Posterior vena cava (tissue), 2 donors: ENCODE measurements at regions of chr20 and their contacts with region 1.

Region 1: DNA sequence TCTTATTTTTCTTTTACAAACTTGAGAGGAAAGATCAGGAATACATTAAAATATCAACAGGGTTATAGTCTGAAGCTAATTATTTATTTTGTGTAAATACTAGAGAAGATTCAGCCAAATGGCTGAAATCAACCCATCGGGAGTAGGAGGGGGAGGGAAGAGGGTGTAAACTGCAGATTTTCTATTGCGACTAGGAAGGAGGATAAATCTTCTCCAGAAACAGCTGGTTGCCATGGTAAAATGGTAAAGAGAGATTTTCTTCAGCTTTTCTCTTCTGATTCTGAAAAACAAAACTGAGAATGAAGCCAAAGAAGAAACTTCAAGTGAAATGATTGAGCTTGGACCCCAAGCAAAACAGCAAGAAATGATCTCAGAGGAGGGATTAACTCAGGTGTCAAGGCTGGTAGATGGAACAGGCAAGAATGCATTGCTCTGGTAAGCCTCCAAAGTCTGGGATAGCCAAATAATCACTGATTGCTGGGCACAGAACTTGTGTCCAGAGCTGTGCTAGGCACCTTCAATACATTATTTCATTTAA is 193.5 kb upstream of the SPTLC3 start:
- DNase-seq: no peak

Region 2: GRCh38 chr20:12762725-12763124 is 52.6 kb before region 1 on chr20:
- intact Hi-C with region 1: no loop called
- DNase-seq: no peak

Region 3: DNA sequence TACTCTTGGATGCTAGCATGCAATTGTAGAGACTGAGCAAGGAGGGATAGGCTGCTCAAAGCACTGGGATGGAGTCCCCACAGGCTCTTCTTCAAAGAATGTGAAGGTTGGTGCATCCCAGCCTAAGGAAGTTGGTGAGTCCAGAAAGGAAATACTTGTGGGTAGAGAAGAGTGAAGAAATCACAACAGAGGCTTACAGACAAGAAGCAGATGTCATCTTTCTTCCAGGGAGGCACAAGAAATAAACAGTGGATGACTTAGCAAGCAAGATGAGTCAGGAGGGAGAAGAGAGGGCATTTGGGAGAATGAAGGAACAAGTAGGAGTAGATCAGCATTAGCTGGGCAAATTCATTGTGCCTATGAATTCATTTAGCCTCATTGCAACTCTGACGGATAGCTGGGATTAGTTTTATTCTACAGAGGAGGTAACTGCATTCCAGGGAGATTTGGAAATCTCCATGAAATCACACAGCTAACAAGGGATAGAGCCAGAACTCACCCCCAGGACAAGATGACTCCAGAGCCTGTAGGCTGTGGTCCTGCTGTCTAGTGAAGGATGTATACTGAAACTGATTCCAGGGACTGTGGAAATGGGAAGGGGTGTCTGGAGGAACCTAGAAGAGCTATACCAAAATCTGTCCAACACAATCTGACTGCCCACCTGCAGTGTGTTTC is 67.7 kb after region 1 on chr20:
- intact Hi-C with region 1: loop called in 1 of 2 experiments (anchors 2 kb)
- DNase-seq: no peak